ENCODE measurements at regions of chr18 and their contacts with region 1.

Region 1: DNA sequence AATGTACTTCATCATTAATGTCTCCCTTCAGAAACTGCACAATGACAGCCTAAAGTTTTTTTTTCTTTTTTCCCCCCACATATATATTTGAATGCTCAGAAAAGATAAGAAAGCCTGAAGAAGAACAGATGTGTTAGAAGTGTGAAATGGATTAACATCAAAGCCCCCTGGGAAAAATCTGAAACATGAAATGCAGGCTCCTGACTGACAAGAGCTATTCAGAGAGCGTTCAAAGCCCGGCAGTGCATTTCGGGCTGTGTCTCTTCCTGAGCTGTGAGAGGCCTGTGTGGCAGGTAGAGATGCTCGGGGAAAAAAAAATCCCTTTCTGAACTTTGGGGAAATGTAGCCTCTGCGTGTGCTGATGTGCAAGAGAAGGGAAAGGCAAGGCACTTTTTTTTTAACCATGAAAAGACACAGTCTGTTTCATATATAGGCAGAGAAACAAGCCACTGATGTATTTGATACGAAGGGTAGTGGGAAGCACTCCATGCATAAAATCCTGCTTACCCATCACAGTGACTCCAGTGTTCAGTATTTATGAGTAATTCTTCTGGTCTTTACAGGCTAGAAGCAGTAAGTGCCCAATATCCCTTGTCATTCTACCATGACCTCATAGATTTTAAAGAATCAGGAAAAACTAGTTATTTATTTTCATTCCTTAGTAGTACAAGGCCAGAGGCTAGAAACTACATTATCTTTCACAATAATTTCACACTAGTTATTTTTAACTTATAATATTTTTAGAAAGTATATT is 1574.2 kb upstream of the PIK3C3 start:
- DNase-seq: no peak
- ATAC-seq: no peak
- H3K4me3 ChIP-seq: no peak overlapping the region
- H3K27ac ChIP-seq: no peak overlapping the region
- H3K4me1 ChIP-seq: no peaks in the 10 kb centered on the region
- H3K27me3 ChIP-seq: no peaks in the 10 kb centered on the region
- CTCF ChIP-seq: no peak

Region 2: DNA sequence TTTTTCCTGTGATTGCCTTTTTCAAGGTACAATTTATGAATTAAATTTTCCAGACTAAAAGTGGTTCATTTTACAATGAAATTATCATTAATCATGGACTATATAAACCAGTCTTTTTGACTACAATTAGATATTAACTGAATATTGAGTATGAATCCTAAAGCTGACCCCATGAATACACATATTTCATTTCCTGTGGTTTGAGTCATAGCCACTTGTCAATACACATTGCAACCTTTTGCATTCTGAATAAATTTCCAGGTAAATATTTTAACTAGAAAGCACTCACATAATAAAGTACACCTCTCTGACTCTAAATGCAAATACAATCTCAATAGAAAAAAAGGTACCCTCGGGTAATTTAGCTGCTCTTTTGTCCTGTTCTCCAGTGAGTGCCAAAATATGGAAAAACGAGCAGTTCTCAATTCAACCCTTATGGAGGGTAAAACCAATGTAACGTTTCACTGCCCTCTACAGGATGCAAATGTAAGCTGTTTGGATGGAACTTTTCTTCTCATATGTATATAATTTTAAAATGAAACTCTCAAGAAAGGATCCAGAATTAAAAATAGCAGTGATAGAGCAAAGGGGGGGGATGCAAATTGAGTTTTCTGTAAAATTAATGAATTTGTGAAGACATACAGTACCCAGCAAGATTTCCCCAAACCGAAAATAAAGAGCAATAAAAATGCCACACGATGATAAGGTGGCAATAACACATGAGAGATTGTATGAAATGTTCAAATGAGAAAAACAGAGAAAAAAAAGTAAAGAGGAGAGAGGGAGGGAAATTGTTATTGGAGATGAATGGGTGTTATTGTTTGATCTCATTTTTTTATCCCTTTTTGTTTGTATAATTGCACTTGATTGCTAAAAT is 221.5 kb before region 1 on chr18:
- intact Hi-C with region 1: no loop called
- DNase-seq: no peak
- ATAC-seq: no peak
- H3K4me3 ChIP-seq: no peak overlapping the region
- H3K27ac ChIP-seq: no peak overlapping the region
- H3K4me1 ChIP-seq: no peaks in the 10 kb centered on the region
- H3K27me3 ChIP-seq: no peaks in the 10 kb centered on the region
- CTCF ChIP-seq: peak in 8 of 9 donors; percentile 8 to 59 (median 40)

Region 3: GRCh38 chr18:40607542-40608148 is 226.8 kb after region 1 on chr18:
- intact Hi-C with region 1: no loop called
- DNase-seq: no peak
- ATAC-seq: no peak
- H3K4me3 ChIP-seq: no peak overlapping the region
- H3K27ac ChIP-seq: no peak overlapping the region
- H3K4me1 ChIP-seq: no peaks in the 10 kb centered on the region
- H3K27me3 ChIP-seq: no peaks in the 10 kb centered on the region
- CTCF ChIP-seq: no peak

Region 4: GRCh38 chr18:41553716-41554115 is 1172.9 kb after region 1 on chr18:
- intact Hi-C with region 1: loop called in 1 of 10 experiments (anchors 10 kb)
- DNase-seq: peak in 1 of 2 donors; percentile 20
- ATAC-seq: peak in 2 of 8 donors; percentile 39 to 52
- H3K4me3 ChIP-seq: no peak overlapping the region
- H3K27ac ChIP-seq: no peak overlapping the region
- H3K4me1 ChIP-seq: peaks cover 0 to 7% (median 0%) of the 10 kb centered on the region in 9 donors
- H3K27me3 ChIP-seq: no peaks in the 10 kb centered on the region
- CTCF ChIP-seq: no peak

Measured in heart right ventricle (tissue), 16 donors.